ENCODE measurements at regions of chr5 and their contacts with region 1.

Region 1: DNA sequence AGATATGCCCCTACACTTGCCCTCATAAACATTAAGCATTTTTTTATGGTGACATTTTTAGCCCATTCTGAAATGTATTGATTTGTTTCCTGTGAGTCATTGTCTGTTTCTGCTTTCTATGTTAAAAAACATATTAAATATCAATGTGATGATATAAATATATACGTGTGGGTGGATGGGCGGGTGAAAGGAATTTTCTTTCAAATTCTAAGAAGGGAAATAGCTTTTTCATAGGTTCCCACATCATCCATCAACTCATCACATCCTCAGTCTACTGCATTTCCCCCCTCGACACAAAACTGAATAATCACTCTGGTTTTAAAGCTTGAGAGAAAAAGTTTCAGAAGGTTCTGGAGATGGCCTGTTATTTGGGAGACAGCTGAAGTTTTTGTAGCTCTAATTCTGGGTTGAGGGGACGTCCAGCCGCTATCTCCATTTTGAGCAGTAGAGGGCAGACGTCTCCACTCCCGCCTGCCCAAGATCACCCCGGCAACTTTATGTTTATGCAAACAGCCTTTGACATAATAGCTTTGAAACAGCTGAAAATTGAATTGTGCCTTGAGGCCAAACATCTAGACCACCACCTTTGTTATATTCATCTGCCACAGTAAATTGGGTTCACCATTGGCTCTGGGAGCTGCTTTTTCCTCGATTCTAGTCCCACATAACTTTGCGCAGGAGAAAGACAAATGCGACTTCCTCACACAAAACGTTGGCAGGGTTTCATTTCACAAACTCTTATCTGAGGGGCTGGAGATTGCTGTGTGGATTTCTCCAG is 216.2 kb upstream of the CLINT1 start:
- DNase-seq: peak; percentile 92
- H3K4me3 ChIP-seq: peak overlapping the region in 2 of 3 experiments; percentile 8 to 50
- H3K27ac ChIP-seq: peak overlapping the region; percentile 97
- H3K4me1 ChIP-seq: peaks cover 18% of the 10 kb centered on the region
- H3K27me3 ChIP-seq: no peaks in the 10 kb centered on the region
- CTCF ChIP-seq: peak; percentile 86 to 87
- POLR2A ChIP-seq: no peak

Region 2: GRCh38 chr5:157858527-157859226 is 216.5 kb before region 1 on chr5 and contains the start of gene CLINT1:
- CTCF ChIA-PET with region 1: interaction called, 3 read pairs
- POLR2A ChIA-PET with region 1: no interaction called
- dilution Hi-C with region 1: no loop called
- intact Hi-C with region 1: loop called (anchors 10 kb)
- DNase-seq: peak; percentile 86
- H3K4me3 ChIP-seq: peak within 1 kb of the TSS; percentile 68 to 95 (median 93)
- H3K27ac ChIP-seq: peak within 1 kb of the TSS; percentile 81
- H3K4me1 ChIP-seq: peaks cover 14% of the 10 kb centered on the region
- H3K27me3 ChIP-seq: no peaks in the 10 kb centered on the region
- CTCF ChIP-seq: no peak
- POLR2A ChIP-seq: peak; percentile 74
- total RNA-seq, gene CLINT1: 76.6 and 79.6 TPM in 2 replicates

Region 3: DNA sequence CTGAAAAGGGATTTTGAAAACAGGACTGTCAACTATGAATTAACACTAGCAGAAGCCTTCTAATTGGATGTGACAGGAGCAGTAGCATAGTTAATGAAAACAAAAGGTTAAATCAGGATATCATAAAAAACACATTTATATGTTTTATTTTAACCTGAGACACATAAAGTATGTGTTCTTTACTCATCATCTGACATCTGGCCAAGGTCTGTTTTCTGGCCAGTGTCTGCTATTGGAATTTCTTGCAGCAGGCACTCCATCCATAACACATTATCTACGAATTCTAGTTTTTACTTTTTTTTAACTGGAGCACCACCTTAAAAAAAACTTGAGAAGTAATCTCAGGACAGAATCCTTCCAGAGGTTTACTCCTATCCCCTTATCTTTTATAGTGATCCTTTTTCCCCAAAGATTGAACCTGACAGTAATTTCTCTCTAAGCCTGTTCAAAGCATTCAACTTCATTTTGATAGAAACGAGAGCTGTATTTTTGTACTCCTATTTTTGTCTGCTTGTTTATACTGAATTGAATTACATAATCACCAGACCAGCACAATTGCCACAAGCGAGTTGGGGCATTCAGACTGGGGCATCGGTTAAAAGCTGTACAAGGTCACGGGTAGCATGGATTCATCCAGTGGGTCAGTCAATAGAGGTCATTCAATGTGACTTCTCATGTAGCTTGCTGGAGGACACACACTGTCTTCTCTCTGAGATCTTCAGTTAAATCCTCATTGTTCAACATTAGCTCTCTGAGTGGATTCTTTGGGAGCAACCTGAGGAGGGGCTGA is 10.7 kb before region 1 on chr5:
- CTCF ChIA-PET with region 1: interaction called, 28 read pairs
- POLR2A ChIA-PET with region 1: no interaction called
- dilution Hi-C with region 1: no loop called
- intact Hi-C with region 1: no loop called
- DNase-seq: no peak
- H3K4me3 ChIP-seq: no peak overlapping the region
- H3K27ac ChIP-seq: no peak overlapping the region
- H3K4me1 ChIP-seq: no peaks in the 10 kb centered on the region
- H3K27me3 ChIP-seq: no peaks in the 10 kb centered on the region
- CTCF ChIP-seq: no peak
- POLR2A ChIP-seq: no peak

Region 4: GRCh38 chr5:158133369-158133768 is 58.2 kb after region 1 on chr5:
- CTCF ChIA-PET with region 1: interaction called, 12 read pairs
- POLR2A ChIA-PET with region 1: no interaction called
- dilution Hi-C with region 1: no loop called
- intact Hi-C with region 1: no loop called
- DNase-seq: peak; percentile 62
- H3K4me3 ChIP-seq: no peak overlapping the region
- H3K27ac ChIP-seq: no peak overlapping the region
- H3K4me1 ChIP-seq: no peaks in the 10 kb centered on the region
- H3K27me3 ChIP-seq: no peaks in the 10 kb centered on the region
- CTCF ChIP-seq: no peak
- POLR2A ChIP-seq: no peak

Region 5: DNA sequence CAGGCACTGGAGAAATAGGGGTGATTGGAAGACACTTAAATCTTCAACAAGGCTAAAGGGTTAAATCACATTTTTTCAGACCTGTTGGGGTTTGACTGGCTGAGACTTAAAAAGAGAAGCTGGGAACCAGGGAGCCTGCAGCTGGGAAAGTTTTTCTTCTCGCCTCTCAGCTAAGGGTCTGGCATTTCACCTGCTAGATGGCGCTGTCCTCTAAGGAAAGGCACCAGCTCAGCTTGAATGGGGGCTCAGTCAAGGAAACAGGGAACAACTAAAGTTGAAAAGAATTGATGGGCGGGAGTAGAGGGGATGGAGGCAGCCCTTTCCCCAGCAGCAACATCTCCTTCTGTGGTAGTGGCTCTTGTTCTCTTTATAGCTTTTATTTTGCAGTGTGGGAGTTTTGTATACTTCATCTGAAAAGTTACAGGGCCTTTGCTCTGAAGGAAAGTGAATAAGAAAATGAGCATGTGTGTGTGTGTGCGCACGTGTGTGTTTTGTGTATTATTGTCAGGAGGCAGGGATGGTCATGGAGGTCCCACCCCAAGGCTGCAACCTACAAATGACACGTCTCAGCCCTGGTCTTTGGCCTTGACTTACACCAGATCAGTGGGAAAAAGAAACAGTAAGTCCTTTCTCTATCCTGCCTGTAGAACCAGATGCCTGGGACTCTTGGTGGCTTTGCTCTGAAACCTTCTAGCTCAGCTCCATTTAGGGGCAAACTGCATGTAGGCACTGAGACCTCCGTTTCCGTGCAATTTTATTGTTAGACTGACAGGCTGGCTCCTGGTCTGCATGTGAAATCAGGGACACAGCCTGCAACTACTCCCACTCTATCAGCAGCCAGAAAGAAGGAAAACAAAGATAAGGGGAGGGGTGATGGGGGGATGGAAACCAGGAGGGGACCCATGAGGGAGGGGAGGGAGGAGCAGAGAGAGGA is 100.0 kb after region 1 on chr5:
- CTCF ChIA-PET with region 1: interaction called, 97 read pairs
- POLR2A ChIA-PET with region 1: no interaction called
- dilution Hi-C with region 1: no loop called
- intact Hi-C with region 1: loop called (anchors 1 kb)
- DNase-seq: peak; percentile 72
- H3K4me3 ChIP-seq: no peak overlapping the region
- H3K27ac ChIP-seq: no peak overlapping the region
- H3K4me1 ChIP-seq: no peaks in the 10 kb centered on the region
- H3K27me3 ChIP-seq: peaks cover 0 to 2% of the 10 kb centered on the region in 2 experiments
- CTCF ChIP-seq: peak; percentile 69 to 80
- POLR2A ChIP-seq: no peak

Region 6: DNA sequence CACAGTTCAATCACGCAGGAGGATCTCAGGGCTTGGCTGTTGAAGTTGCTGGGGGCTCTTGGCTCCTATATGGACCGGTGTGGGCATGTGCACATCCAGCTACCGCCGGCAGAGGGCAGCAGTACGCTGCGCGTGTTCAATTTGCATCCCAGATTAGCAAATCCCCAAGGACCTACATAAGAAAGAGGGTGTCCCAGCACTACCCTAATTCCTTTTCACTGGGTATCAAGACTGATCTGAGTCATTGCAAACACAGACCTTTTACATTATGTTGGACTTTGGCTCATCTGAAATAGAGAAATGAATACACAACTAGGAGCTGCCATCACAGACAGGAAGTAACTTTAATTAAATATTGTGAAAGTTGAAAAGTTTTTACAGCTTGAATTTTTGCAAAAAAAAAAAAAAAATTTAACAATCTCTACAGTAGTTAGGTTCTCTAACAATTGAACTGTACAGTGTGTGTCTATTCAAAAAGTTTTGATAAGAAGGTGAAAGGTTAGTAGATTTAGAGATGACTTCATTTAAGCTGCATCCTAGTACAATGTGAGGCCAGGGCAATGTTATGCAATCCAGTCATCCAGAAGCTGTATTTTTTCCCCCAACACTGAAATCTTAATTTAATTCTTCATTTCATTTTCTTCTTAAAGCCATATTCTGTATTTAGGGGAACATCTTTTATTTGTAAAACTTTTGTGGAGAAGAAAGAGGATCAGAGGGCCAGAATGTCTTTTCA is 620.6 kb after region 1 on chr5:
- CTCF ChIA-PET with region 1: interaction called, 27 read pairs
- POLR2A ChIA-PET with region 1: no interaction called
- dilution Hi-C with region 1: no loop called
- intact Hi-C with region 1: loop called (anchors 1 kb)
- DNase-seq: peak; percentile 75
- H3K4me3 ChIP-seq: no peak overlapping the region
- H3K27ac ChIP-seq: no peak overlapping the region
- H3K4me1 ChIP-seq: no peaks in the 10 kb centered on the region
- H3K27me3 ChIP-seq: no peaks in the 10 kb centered on the region
- CTCF ChIP-seq: peak; percentile 78 to 92
- POLR2A ChIP-seq: no peak

Region 7: GRCh38 chr5:158875272-158875679 is 800.1 kb after region 1 on chr5:
- CTCF ChIA-PET with region 1: no interaction called
- POLR2A ChIA-PET with region 1: no interaction called
- dilution Hi-C with region 1: no loop called
- intact Hi-C with region 1: no loop called
- DNase-seq: no peak
- H3K4me3 ChIP-seq: no peak overlapping the region
- H3K27ac ChIP-seq: no peak overlapping the region
- H3K4me1 ChIP-seq: no peaks in the 10 kb centered on the region
- H3K27me3 ChIP-seq: no peaks in the 10 kb centered on the region
- CTCF ChIP-seq: no peak
- POLR2A ChIP-seq: no peak

Region 8: GRCh38 chr5:159218595-159219023 is 1143.4 kb after region 1 on chr5:
- CTCF ChIA-PET with region 1: no interaction called
- POLR2A ChIA-PET with region 1: no interaction called
- dilution Hi-C with region 1: no loop called
- intact Hi-C with region 1: no loop called
- DNase-seq: no peak
- H3K4me3 ChIP-seq: no peak overlapping the region
- H3K27ac ChIP-seq: no peak overlapping the region
- H3K4me1 ChIP-seq: no peaks in the 10 kb centered on the region
- H3K27me3 ChIP-seq: peaks cover 0 to 6% of the 10 kb centered on the region in 2 experiments
- CTCF ChIP-seq: no peak
- POLR2A ChIP-seq: no peak